ENCODE measurements at regions of chr14 and their contacts with region 1.

Region 1: DNA sequence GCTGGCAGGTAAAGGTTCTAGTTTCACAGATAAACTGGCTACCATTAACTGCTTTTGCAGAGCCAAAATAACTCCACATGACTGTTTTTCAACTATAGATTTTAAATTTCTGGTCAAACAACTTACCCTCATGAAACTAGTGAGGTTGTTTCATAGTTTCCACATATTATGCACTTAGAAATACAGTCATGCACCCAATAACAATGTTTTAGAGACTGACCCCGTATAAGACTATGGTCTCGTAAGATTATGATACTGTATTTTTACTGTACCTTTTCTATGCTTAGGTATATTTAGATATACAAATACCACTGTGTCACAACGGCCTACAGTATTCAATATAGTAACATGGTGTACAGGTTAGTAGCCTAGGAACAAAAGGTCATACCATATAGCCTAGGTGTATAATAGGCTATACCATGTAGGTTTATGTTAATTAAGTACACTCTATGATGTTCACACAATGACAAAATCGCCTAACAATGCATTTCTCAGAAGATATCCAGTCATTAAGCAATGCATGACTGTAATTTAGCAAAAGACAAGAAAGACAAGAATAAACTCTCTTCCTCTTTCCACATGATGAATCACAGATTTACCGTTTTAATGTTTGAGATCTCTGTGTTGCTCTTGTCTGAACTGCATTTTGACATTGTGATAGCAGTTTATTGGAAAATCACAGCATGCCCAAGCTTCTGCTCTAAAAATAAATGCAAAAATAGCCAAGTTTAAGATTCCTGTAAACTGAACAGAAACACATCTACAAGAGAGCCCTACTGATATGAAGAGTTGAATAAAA is 17.1 kb downstream of the DICER1 start:
- DNase-seq: peak; percentile 58
- ATAC-seq: peak; percentile 70
- H3K4me3 ChIP-seq: no peak overlapping the region
- H3K27ac ChIP-seq: no peak overlapping the region
- H3K4me1 ChIP-seq: peaks cover 6% of the 10 kb centered on the region
- H3K27me3 ChIP-seq: no peaks in the 10 kb centered on the region
- CTCF ChIP-seq: no peak
- POLR2A ChIP-seq: no peak
- RAD21 ChIP-seq: no peak

Region 2: GRCh38 chr14:95515596-95516552 is 375.6 kb after region 1 on chr14:
- CTCF ChIA-PET with region 1: no interaction called
- POLR2A ChIA-PET with region 1: no interaction called
- dilution Hi-C with region 1: no loop called
- in situ Hi-C with region 1: loop called (anchors 25 kb)
- intact Hi-C with region 1: no loop called
- DNase-seq: peak; percentile 45
- ATAC-seq: peak; percentile 72
- H3K4me3 ChIP-seq: peak overlapping the region; percentile 25
- H3K27ac ChIP-seq: peak overlapping the region; percentile 7
- H3K4me1 ChIP-seq: peaks cover 34% of the 10 kb centered on the region
- H3K27me3 ChIP-seq: no peaks in the 10 kb centered on the region
- CTCF ChIP-seq: peak; percentile 34
- POLR2A ChIP-seq: no peak
- RAD21 ChIP-seq: no peak

Measured in IMR-90 (cell line).